Left ventricle myocardium superior (tissue), 1 donor: ENCODE measurements at regions of chr20 and their contacts with region 1.

Region 1: GRCh38 chr20:20664795-20665589 is 47.5 kb downstream of the RALGAPA2 start:
- DNase-seq: no peak
- ATAC-seq: peak; percentile 87

Region 2: GRCh38 chr20:20824924-20825584 is 160.1 kb after region 1 on chr20:
- intact Hi-C with region 1: loop called (anchors 1 kb)
- DNase-seq: peak; percentile 59
- ATAC-seq: peak; percentile 66